ENCODE measurements at regions of chr13 and their contacts with region 1.

Region 1: GRCh38 chr13:76980075-76980718 is 11.7 kb upstream of the CLN5 start:
- DNase-seq: peak; percentile 88
- H3K4me3 Mint-ChIP-seq: no peak overlapping the region
- H3K27ac Mint-ChIP-seq: no peak overlapping the region
- H3K4me1 Mint-ChIP-seq: peaks cover 6% of the 10 kb centered on the region
- H3K27me3 Mint-ChIP-seq: peaks cover 17% of the 10 kb centered on the region

Region 2: GRCh38 chr13:76822698-76823267 is 157.4 kb before region 1 on chr13:
- CTCF ChIA-PET with region 1: no interaction called
- POLR2A ChIA-PET with region 1: no interaction called
- intact Hi-C with region 1: loop called (anchors 2 kb)
- DNase-seq: no peak
- H3K4me3 Mint-ChIP-seq: no peak overlapping the region
- H3K27ac Mint-ChIP-seq: no peak overlapping the region
- H3K4me1 Mint-ChIP-seq: no peaks in the 10 kb centered on the region
- H3K27me3 Mint-ChIP-seq: peaks cover 7% of the 10 kb centered on the region

Region 3: GRCh38 chr13:76969493-76970369 is 10.5 kb before region 1 on chr13:
- CTCF ChIA-PET with region 1: interaction called, 12 read pairs
- POLR2A ChIA-PET with region 1: interaction called, 3 read pairs
- intact Hi-C with region 1: no loop called
- DNase-seq: no peak
- H3K4me3 Mint-ChIP-seq: no peak overlapping the region
- H3K27ac Mint-ChIP-seq: no peak overlapping the region
- H3K4me1 Mint-ChIP-seq: peaks cover 3% of the 10 kb centered on the region
- H3K27me3 Mint-ChIP-seq: peaks cover 15% of the 10 kb centered on the region